AG04450 (cell line): ENCODE measurements at regions of chr10 and their contacts with region 1.

Region 1: DNA sequence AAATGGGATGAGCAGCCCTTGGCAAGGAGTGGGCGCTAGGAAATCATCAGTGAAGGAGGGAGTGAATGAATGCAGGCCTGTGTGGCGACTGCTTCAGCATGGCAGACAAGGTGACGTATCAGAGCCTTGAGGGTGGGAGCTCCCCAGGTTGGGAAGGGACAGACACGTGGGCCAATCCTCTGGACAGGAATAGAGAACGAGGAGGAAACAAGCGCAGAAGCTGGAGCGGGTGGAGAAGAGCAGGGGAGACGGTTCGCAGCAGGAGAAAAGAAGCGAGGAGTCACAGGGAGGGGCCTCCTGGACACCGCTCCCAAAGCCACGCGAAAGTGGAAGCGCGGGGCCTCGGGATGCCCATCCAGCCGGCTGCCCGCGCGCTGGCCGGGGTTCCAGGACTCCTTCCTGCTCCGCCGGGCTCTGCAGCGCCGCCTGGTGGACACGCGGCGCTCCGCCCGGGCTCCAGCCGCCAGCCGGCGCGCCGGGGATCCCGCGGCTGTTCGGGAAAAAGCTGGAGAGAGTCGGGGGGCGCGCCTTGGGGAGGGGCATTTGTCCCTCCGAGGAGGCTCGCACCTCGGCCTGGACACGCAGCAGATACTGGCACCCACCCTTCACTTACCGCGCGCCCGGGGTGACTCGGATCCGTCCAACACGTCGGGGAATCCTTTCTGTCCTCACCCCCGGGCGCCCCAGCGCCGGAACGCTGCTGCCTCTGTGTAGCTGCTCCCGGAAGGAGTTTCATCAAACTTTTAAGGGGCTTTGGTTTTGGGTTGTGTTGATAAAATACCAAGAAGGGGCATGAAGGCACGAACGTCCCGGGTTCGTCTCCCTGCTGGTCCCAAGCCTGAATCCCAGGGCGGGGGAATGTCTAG is 6.3 kb downstream of the ZNF503 start:
- DNase-seq: no peak
- H3K4me3 ChIP-seq: peak overlapping the region; percentile 100
- H3K27ac ChIP-seq: peak overlapping the region; percentile 87
- H3K27me3 ChIP-seq: no peaks in the 10 kb centered on the region
- CTCF ChIP-seq: peak; percentile 72

Region 2: GRCh38 chr10:75294866-75295701 is 100.2 kb before region 1 on chr10:
- CTCF ChIA-PET with region 1: interaction called, 23 read pairs
- POLR2A ChIA-PET with region 1: interaction called, 6 read pairs
- DNase-seq: peak; percentile 86
- H3K4me3 ChIP-seq: peak overlapping the region; percentile 52
- H3K27ac ChIP-seq: no peak overlapping the region
- H3K27me3 ChIP-seq: peaks cover 26% of the 10 kb centered on the region
- CTCF ChIP-seq: no peak

Region 3: GRCh38 chr10:75358835-75359431 is 36.4 kb before region 1 on chr10:
- CTCF ChIA-PET with region 1: interaction called, 12 read pairs
- POLR2A ChIA-PET with region 1: interaction called, 7 read pairs
- DNase-seq: peak; percentile 59
- H3K4me3 ChIP-seq: no peak overlapping the region
- H3K27ac ChIP-seq: peak overlapping the region; percentile 77
- H3K27me3 ChIP-seq: no peaks in the 10 kb centered on the region
- CTCF ChIP-seq: no peak